RWPE1 (cell line): ENCODE measurements at regions of chr1 and their contacts with region 1.

Region 1: DNA sequence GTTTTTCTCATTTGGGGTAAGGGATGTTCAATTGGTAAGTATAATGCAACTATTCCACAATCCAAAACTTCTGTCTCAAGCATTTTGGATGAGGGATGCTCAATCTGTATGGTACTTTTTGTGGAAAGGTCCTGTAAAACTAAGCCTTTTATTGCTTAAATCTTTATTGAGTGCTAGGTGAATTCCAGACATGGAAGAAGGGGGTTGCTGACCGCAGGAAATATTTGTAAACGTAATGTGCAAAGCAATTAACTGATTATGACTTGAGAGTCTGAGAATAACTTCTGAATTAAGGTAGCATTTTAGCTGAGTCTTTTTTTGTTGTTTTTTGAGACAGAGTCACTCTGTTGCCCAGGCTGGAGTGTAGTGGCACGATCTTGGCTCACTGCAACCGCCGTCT is 3.1 kb downstream of the AKIRIN1 start:
- DNase-seq: no peak
- H3K27ac ChIP-seq: no peak overlapping the region
- CTCF ChIP-seq: no peak

Region 2: GRCh38 chr1:38527373-38527966 is 466.7 kb before region 1 on chr1:
- CTCF ChIA-PET with region 1: no interaction called
- POLR2A ChIA-PET with region 1: no interaction called
- DNase-seq: peak; percentile 55
- H3K27ac ChIP-seq: peak overlapping the region; percentile 64
- CTCF ChIP-seq: no peak

Region 3: DNA sequence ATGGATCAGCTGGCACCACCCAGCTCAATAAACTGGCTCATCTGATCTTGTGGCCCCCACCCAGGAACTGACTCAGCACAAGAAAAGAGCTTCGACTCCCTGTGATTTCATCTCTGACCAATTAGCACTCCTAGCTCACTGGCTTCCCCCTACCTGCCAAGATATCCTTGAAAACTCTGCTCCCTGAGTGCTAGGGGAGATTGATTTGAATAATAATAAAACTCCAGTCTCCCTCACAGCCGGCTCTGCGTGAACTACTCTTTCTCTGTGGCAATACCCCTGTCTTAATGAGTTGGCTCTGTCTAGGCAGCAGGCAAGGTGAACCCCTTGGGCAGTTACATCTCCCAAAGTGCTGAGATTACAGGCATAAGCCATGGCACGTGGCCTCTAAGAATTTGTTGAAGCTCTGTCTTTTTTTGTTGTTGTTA is 40.7 kb before region 1 on chr1:
- CTCF ChIA-PET with region 1: no interaction called
- POLR2A ChIA-PET with region 1: interaction called, 13 read pairs
- DNase-seq: no peak
- H3K27ac ChIP-seq: no peak overlapping the region
- CTCF ChIP-seq: no peak